ENCODE measurements at regions of chr1 and their contacts with region 1.

Region 1: GRCh38 chr1:23530747-23531561 is at the start of gene E2F2:
- DNase-seq: peak; percentile 94
- H3K4me3 Mint-ChIP-seq: peak within 1 kb of the TSS; percentile 87
- H3K27ac Mint-ChIP-seq: peak within 1 kb of the TSS; percentile 95
- H3K4me1 Mint-ChIP-seq: peaks cover 63% of the 10 kb centered on the region
- H3K27me3 Mint-ChIP-seq: no peaks in the 10 kb centered on the region
- total RNA-seq, gene E2F2: 30.4 and 33.7 TPM in 2 replicates

Region 2: DNA sequence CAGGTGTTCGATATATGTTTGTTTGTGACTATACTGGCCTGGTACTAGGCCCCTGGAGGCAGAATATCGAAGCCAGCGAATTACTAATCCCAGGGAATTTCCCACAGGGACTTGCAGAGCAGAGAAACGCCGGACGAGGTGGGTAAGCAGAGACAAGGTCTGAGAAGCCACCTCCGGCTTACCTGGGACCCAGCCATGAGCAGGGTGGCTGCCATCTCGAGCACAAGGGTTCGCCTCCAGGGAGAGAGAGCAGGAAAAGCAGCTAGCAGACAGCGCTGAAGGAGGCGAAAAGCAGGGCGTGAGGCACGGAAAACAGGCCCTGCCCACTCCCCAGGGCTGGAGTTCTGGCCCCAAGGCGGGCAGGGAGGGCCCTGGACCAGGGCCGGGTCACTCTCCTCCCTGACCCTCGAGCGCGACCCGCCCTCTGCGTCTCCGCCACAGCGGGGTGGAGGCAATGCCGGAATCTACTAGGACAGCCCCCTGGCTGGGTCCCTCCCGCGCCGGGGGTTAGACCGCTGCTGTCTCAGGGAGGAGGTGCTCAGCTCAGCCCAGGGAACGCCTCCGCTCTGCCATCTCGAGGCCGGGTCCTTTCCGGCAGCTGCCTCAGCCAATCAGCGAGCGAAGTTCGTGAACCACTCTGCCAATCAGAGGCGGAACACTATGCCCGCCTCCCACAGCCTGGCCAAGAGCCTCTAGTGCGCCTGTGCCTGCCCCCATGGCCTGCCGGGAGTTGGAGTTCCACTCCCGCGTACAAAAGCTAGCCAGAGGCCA is 163.0 kb before region 1 on chr1:
- intact Hi-C with region 1: loop called (anchors 5 kb)
- DNase-seq: peak; percentile 99
- H3K4me3 Mint-ChIP-seq: peak overlapping the region; percentile 94
- H3K27ac Mint-ChIP-seq: peak overlapping the region; percentile 99
- H3K4me1 Mint-ChIP-seq: peaks cover 33% of the 10 kb centered on the region
- H3K27me3 Mint-ChIP-seq: no peaks in the 10 kb centered on the region

Region 3: DNA sequence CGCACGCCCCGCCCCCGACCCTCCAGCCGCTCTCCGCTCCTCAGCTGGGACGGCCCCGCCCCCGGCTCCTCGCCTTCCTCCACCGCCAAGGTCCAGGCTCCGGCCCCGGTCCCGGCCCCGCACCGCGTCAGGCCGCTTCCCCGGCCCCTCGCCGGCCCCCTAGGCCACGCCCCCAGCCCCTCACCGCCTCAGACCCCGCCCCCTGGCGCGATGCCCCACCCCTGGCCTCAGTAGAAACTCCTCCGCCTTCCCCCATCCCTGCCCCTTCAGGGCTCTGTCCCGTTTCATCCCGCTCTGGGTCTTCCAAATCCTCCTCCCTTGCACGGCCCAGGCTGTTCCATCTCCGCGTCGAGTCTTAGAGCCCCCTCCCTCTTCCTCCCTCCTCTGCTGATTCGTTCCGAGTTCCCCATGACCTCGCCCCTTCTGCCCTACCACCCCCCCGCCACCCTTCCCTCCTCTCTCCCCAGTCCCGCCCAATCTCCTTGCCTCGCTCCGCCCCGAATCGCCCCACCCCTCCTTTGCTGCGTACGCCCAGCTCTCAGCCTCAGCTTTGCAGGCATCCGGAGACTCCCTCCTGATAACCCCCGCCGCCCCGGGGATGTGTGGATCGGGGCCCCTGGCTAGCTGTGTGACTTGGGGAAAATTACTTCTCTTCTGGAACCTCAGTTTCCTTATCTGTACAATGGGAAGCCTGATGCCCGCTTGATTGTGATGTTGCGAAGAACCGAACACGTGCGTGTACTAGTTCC is 46.5 kb before region 1 on chr1:
- intact Hi-C with region 1: loop called (anchors 5 kb)
- DNase-seq: peak; percentile 96
- H3K4me3 Mint-ChIP-seq: peak overlapping the region; percentile 89
- H3K27ac Mint-ChIP-seq: peak overlapping the region; percentile 27
- H3K4me1 Mint-ChIP-seq: peaks cover 17% of the 10 kb centered on the region
- H3K27me3 Mint-ChIP-seq: peaks cover 65% of the 10 kb centered on the region